HCT116 (cell line): ENCODE measurements at regions of chr9 and their contacts with region 1.

Region 1: DNA sequence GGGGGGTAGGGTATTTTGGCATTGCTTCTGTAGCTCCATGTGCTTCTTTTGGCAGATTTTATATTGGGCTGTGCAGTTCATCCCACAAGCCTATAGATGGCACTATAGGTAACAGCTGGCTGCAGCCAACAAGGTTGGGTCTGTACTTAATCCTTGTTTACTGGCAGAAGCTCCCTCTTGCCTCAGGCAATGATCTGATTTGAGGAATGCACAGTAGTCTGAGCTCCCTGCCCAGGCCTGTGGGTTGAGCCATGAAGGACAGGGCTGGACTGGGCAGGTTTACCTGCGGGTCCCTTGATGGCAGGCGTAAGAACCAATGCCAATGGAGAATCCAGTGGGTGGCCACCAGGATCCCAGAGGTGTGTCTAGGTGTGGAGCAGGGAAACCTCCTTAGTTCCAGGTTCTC is 11.7 kb upstream of the OR1J2 start:
- DNase-seq: peak; percentile 29
- ATAC-seq: peak; percentile 94
- H3K4me3 ChIP-seq: no peak overlapping the region
- H3K27ac ChIP-seq: no peak overlapping the region
- H3K4me1 ChIP-seq: no peaks in the 10 kb centered on the region
- H3K27me3 ChIP-seq: peaks cover 40% of the 10 kb centered on the region
- CTCF ChIP-seq: peak; percentile 44 to 85 (median 83); a peak in 5 of 6 replicates
- POLR2A ChIP-seq: no peak
- RAD21 ChIP-seq: peak; percentile 60

Region 2: GRCh38 chr9:122477346-122477745 is 21.5 kb before region 1 on chr9:
- CTCF ChIA-PET with region 1: interaction called, 12 read pairs
- POLR2A ChIA-PET with region 1: no interaction called
- RAD21 ChIA-PET with region 1: no interaction called
- intact Hi-C with region 1: no loop called
- DNase-seq: no peak
- ATAC-seq: no peak
- H3K4me3 ChIP-seq: no peak overlapping the region
- H3K27ac ChIP-seq: no peak overlapping the region
- H3K4me1 ChIP-seq: no peaks in the 10 kb centered on the region
- H3K27me3 ChIP-seq: 0 out of 2 replicates have a peak, but pooled peaks cover 24% of the 10 kb centered on the region
- CTCF ChIP-seq: no peak
- POLR2A ChIP-seq: no peak
- RAD21 ChIP-seq: no peak

Region 3: GRCh38 chr9:122609806-122610205 is 110.9 kb after region 1 on chr9:
- CTCF ChIA-PET with region 1: no interaction called
- POLR2A ChIA-PET with region 1: no interaction called
- RAD21 ChIA-PET with region 1: no interaction called
- intact Hi-C with region 1: no loop called
- DNase-seq: no peak
- ATAC-seq: no peak
- H3K4me3 ChIP-seq: no peak overlapping the region
- H3K27ac ChIP-seq: no peak overlapping the region
- H3K4me1 ChIP-seq: no peaks in the 10 kb centered on the region
- H3K27me3 ChIP-seq: peaks cover 26% of the 10 kb centered on the region
- CTCF ChIP-seq: no peak
- POLR2A ChIP-seq: no peak
- RAD21 ChIP-seq: no peak